ENCODE measurements at regions of chr13 and their contacts with region 1.

Region 1: GRCh38 chr13:105436943-105437342 is 1098.5 kb downstream of the EFNB2 start:
- DNase-seq: peak; percentile 92
- H3K4me3 ChIP-seq: no peak overlapping the region
- H3K27ac ChIP-seq: peak overlapping the region; percentile 74
- H3K4me1 ChIP-seq: peaks cover 33% of the 10 kb centered on the region
- H3K27me3 ChIP-seq: no peaks in the 10 kb centered on the region
- CTCF ChIP-seq: no peak
- POLR2A ChIP-seq: no peak

Region 2: GRCh38 chr13:105089858-105090643 is 346.9 kb before region 1 on chr13:
- CTCF ChIA-PET with region 1: no interaction called
- POLR2A ChIA-PET with region 1: no interaction called
- dilution Hi-C with region 1: no loop called
- intact Hi-C with region 1: no loop called
- DNase-seq: peak; percentile 4
- H3K4me3 ChIP-seq: no peak overlapping the region
- H3K27ac ChIP-seq: no peak overlapping the region
- H3K4me1 ChIP-seq: no peaks in the 10 kb centered on the region
- H3K27me3 ChIP-seq: no peaks in the 10 kb centered on the region
- CTCF ChIP-seq: no peak
- POLR2A ChIP-seq: no peak

Region 3: GRCh38 chr13:105403086-105403485 is 33.9 kb before region 1 on chr13:
- CTCF ChIA-PET with region 1: no interaction called
- POLR2A ChIA-PET with region 1: no interaction called
- dilution Hi-C with region 1: no loop called
- intact Hi-C with region 1: no loop called
- DNase-seq: no peak
- H3K4me3 ChIP-seq: no peak overlapping the region
- H3K27ac ChIP-seq: no peak overlapping the region
- H3K4me1 ChIP-seq: no peaks in the 10 kb centered on the region
- H3K27me3 ChIP-seq: no peaks in the 10 kb centered on the region
- CTCF ChIP-seq: no peak
- POLR2A ChIP-seq: no peak

Region 4: DNA sequence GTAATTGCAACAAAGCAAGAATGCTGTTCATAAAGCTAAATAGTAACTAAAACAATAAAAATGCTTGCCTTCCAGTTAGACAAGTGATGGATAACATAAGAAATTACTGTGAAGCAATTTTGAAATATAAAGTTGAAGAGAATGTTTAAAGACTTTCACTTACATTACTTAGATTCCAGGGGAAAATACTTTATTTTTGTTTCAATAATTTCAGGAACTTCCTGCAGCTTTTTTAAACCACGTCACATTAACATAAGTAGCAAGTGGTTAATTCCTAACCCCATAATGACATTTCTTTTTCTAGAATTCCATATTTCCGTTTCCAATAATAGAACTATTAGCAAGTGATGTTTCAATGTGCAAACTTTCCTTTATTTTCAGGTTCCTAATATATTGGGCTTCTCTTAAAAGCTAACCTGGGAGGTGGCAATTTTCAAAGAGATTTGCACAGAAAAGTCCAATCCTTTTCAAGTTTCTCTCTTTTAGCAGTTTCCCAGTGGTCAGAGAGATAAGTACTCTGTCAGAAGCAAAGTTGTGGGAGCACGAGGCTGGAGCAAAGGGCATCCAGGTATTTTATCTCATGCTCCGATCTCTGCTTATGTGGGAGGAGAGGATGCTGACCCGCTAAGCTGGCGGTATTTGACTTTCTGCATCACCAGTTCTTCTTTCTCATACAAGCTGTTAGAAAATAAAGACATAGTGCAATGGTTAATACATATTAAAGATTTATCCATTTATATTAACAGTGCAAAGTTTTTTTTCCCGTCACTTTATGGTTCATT is 73.2 kb after region 1 on chr13:
- CTCF ChIA-PET with region 1: no interaction called
- POLR2A ChIA-PET with region 1: interaction called, 4 read pairs
- dilution Hi-C with region 1: no loop called
- intact Hi-C with region 1: loop called (anchors 2 kb)
- DNase-seq: no peak
- H3K4me3 ChIP-seq: no peak overlapping the region
- H3K27ac ChIP-seq: peak overlapping the region; percentile 17
- H3K4me1 ChIP-seq: peaks cover 30% of the 10 kb centered on the region
- H3K27me3 ChIP-seq: no peaks in the 10 kb centered on the region
- CTCF ChIP-seq: no peak
- POLR2A ChIP-seq: no peak